Motor neuron (in vitro differentiated cells): ENCODE measurements at regions of chr1 and their contacts with region 1.

Region 1: DNA sequence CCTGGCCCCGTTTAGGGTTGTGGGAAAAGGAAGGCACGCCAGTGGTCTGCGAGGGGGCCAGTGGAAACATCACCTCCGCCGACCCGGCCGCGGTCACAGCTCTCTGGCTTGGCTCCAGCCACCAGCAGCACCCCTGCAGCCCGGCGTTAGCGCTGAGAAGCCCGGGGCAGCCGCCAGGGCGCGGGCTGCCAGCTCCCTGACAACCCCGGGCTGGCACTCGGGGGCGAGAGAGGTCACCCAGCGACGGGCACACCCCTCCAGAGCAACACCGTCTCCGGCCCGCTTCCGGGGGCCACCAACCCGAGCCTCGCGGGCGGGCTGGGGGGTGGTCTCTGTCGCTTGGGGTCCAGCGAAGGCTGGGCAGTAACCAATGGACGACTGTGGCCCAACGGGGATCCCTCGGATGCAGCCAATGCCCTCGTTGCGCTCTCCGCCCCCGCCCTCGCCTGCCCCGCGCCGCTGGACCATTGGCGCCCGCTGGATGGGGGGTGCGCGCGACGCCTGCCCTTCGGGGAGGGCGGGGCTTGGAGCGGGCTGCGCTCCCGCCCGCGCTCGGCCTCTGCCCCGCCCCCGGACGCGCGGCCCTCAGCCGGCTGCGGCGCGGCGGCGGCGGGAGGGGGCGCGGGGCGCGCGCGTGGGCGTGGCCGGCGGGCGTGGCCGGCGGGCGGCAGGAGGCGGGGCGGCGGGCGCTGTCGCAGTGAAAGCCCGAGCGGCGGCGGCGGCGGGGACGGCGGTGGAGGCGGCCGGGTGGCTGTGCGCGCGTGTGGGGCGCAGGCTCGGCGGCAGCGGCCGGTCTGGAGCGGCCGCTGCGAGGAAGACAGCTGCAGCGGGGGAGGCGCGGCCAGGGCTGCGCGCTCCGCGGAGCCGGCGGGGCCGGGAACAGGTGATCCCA is at the start of gene MAN1C1:
- ATAC-seq: peak; percentile 71 to 90 (median 88)
- H3K4me3 ChIP-seq: peak within 1 kb of the TSS; percentile 37 to 66 (median 54)
- H3K27ac ChIP-seq: peak within 1 kb of the TSS in 1 of 2 donors; percentile 11
- H3K4me1 ChIP-seq: peaks cover 14 to 28% of the 10 kb centered on the region in 2 donors
- total RNA-seq, gene MAN1C1: 1.2 to 67.4 (median 5.7) TPM

Region 2: DNA sequence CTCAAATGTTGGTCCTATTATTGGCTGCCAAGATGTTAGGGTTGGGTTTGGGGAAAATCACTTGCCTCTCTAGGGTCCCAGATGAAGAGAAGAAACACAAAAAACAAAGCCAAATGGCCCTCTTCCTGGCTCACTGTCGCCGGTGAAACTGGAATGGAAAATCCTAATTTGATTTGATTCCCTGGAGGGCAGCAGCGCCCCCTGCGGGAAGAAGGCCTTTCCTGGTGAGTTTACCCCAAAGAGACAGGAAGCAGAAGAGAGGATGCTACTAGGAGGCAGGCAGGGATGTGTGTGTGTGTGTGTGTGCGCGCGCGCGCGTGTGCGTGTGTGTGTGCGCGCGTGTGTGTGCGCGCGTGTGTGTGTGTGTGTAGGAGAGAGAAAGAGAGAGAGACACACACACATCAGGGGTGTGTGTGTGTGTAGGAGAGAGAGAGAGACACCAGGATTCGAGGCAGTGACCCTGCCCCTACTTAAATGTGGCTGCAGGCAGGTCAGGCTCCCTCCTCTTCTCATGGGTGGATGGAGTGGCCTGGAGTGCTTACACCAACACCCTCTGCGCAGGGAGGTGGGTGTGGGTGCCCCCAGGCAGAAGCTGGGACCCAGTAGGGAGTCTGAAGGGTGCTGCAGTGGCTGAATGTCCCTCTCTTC is 180.6 kb after region 1 on chr1:
- in situ Hi-C with region 1: loop called (anchors 10 to 25 kb)
- ATAC-seq: peak in 3 of 8 experiments; percentile 18 to 32 (median 21)
- H3K4me3 ChIP-seq: no peak overlapping the region
- H3K27ac ChIP-seq: no peak overlapping the region
- H3K4me1 ChIP-seq: peaks cover 14 to 18% of the 10 kb centered on the region in 2 donors

Region 3: GRCh38 chr1:25819576-25820246 is 203.4 kb after region 1 on chr1 and contains the start of gene MTFR1L:
- in situ Hi-C with region 1: loop called in 2 of 9 experiments (anchors 25 kb)
- ATAC-seq: peak; percentile 73 to 93 (median 89)
- H3K4me3 ChIP-seq: peak within 1 kb of the TSS; percentile 62 to 99 (median 64)
- H3K27ac ChIP-seq: peak within 1 kb of the TSS; percentile 85 to 90
- H3K4me1 ChIP-seq: peaks cover 14 to 16% of the 10 kb centered on the region in 2 donors
- total RNA-seq, gene MTFR1L: 58.3 to 92.1 (median 66.7) TPM